Posterior vena cava (tissue), 2 donors: ENCODE measurements at regions of chr2 and their contacts with region 1.

Region 1: GRCh38 chr2:135004005-135004746 is 43.1 kb downstream of the MAP3K19 start:
- DNase-seq: peak; percentile 91

Region 2: GRCh38 chr2:134819334-134819733 is 184.8 kb before region 1 on chr2:
- intact Hi-C with region 1: no loop called
- DNase-seq: no peak

Region 3: DNA sequence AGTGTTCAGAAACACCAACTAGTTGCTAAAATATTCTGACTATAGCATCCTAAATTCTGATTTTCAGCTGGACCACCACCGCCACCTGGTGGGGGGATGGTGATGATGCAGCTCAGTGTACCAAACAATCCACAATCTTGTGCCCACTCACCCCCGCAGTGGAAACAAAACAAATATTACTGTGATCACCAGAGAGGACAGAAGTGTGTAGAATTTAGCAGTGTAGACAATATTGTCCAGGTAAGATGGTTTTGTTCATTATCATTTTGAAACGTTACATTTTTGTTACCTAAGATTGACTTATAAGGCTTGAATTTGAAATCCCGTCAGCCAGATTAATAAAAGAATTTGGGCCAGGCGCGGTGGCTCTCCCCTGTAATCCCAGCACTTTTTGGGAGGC is 705.8 kb after region 1 on chr2:
- intact Hi-C with region 1: loop called (anchors 10 kb)
- DNase-seq: peak; percentile 85